CD4-positive, alpha-beta memory T cell (primary cell): ENCODE measurements at regions of chr15 and their contacts with region 1.

Region 1: DNA sequence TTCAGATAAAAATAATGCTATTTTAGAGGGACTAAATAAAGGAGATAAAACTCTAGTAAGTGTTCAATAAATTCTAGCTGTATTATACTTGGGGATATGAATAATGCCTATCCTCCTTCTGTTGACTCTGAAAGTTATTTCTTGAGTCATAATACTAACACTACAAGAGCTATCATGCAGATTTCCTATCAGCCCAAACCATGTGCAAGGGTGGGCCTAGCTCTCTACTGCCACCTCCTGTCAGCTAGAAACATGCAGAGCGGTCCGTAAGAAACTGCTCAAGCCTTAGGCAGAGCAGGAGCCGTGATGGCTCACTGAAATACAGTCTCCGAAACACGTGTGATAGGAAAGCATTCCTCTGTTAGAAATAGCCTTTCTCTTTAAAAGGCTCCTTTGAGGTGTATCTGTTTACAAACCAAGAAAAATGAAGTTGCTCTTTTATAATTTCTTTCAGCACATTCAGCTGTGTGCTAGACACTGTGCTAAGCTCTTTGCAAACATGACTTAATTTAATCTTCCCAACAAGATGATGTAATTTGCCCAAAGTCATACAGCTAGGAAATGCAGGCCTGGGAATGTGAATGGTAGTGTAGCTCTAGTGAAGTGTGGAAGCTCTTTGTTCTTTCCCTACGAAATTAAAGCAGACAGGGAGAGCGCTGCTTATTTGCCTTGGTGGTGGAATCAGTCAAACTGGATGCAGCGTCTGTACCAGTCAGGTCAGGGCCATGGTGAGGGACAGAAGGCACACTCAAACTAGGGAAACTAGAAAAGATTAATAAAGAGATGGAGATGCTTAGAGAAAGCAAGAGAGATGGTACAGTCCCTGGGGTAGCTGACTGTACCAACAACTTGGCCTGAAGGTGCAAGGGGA is 43.1 kb downstream of the MTHFS start:
- DNase-seq: peak; percentile 41 to 50 (median 46)
- H3K4me3 ChIP-seq: no peak overlapping the region
- H3K4me3 Mint-ChIP-seq: no peak overlapping the region
- H3K27ac ChIP-seq: no peak overlapping the region
- H3K27ac Mint-ChIP-seq: peak overlapping the region in 2 of 7 donors; percentile 18 to 39
- H3K4me1 ChIP-seq: peaks cover 5% of the 10 kb centered on the region
- H3K4me1 Mint-ChIP-seq: peaks cover 10 to 31% (median 16%) of the 10 kb centered on the region in 4 donors
- H3K27me3 ChIP-seq: no peaks in the 10 kb centered on the region
- H3K27me3 Mint-ChIP-seq: no peaks in the 10 kb centered on the region

Region 2: DNA sequence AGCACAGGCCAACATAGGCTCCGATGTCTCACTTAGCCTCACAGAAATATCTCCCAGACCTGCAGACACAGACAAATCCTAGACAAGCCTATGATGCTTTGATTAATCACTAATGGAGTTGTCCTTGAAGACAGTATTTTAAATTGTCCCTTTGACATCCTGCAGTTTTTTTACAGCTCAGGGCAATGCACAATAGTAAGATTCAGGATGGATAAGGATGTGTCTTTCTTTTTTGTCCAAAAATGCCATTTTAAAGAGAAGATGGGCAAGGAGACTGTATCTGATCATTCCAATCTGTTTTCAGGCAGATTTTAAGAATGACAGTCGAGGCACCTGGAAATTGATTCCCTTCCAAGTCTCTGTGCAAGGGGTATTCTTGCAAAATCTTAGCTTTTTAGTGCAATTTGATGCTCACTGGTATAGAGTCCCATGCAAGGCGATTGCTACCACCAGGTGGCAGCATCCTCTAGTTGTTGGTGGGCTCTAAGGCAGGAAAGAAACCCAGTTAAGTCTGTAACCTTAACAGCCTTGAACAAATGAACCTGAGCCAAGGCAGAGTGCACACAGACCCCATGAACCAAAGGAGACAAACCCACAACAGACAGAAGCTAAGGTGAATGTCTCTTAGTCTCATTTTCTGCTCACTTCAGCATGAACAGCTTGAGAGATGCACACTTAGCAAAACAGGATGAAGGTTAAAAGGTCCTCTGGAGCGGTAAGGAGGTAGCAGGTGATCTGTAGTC is 472.8 kb before region 1 on chr15:
- CTCF ChIA-PET with region 1: interaction called, 53 read pairs
- POLR2A ChIA-PET with region 1: no interaction called
- intact Hi-C with region 1: loop called (anchors 1 kb)
- DNase-seq: peak; percentile 47 to 65 (median 59)
- H3K4me3 ChIP-seq: no peak overlapping the region
- H3K4me3 Mint-ChIP-seq: no peak overlapping the region
- H3K27ac ChIP-seq: no peak overlapping the region
- H3K27ac Mint-ChIP-seq: no peak overlapping the region
- H3K4me1 ChIP-seq: no peaks in the 10 kb centered on the region
- H3K4me1 Mint-ChIP-seq: peaks cover 0 to 4% (median 2%) of the 10 kb centered on the region in 4 donors
- H3K27me3 ChIP-seq: no peaks in the 10 kb centered on the region
- H3K27me3 Mint-ChIP-seq: no peaks in the 10 kb centered on the region

Region 3: DNA sequence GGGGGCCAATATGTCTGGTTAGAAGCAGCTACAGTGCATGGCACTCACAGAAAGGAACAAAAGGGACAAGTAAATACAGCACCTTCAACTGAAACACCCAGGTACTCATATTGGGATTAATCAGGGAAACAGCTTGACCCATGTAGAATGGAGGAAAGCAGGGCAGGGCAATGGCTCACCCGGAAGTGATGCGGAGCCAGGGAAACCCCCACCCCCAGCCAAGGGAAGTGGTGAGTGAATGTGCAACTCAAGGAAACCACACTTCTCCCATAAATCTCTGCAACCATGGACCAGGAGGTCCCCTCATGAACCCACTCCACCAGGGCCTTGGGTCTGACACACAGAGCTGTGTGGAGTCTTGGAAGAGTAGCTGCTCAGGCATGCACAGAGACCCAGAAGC is 73.9 kb before region 1 on chr15:
- CTCF ChIA-PET with region 1: no interaction called
- POLR2A ChIA-PET with region 1: no interaction called
- intact Hi-C with region 1: no loop called
- DNase-seq: no peak
- H3K4me3 ChIP-seq: no peak overlapping the region
- H3K4me3 Mint-ChIP-seq: peak overlapping the region in 1 of 8 donors; percentile 60
- H3K27ac ChIP-seq: no peak overlapping the region
- H3K27ac Mint-ChIP-seq: no peak overlapping the region
- H3K4me1 ChIP-seq: peaks cover 8% of the 10 kb centered on the region
- H3K4me1 Mint-ChIP-seq: peaks cover 2 to 17% (median 5%) of the 10 kb centered on the region in 4 donors
- H3K27me3 ChIP-seq: no peaks in the 10 kb centered on the region
- H3K27me3 Mint-ChIP-seq: peaks cover 14 to 16% of the 10 kb centered on the region in 2 donors

Region 4: DNA sequence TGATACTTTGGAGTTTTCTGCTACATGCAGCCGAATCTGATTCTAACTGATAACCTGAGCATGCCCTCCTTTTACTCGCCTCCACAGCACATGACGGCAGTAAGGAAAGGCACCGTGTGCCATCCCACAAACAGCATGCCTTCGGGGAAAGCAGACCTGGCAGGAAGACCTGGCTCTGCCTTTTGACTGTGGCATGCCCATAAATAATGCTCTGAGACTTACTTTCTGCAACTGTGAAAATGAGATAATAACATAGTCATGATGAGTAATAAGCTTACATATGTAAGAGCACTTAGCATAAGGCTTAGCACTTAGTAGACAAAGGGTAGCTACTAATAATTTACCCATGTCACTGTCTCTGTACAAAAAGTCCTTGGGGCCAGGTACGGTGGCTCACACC is 10.2 kb after region 1 on chr15:
- CTCF ChIA-PET with region 1: interaction called, 74 read pairs
- POLR2A ChIA-PET with region 1: no interaction called
- intact Hi-C with region 1: no loop called
- DNase-seq: no peak
- H3K4me3 ChIP-seq: no peak overlapping the region
- H3K4me3 Mint-ChIP-seq: no peak overlapping the region
- H3K27ac ChIP-seq: no peak overlapping the region
- H3K27ac Mint-ChIP-seq: no peak overlapping the region
- H3K4me1 ChIP-seq: no peaks in the 10 kb centered on the region
- H3K4me1 Mint-ChIP-seq: peaks cover 6 to 31% (median 20%) of the 10 kb centered on the region in 4 donors
- H3K27me3 ChIP-seq: no peaks in the 10 kb centered on the region
- H3K27me3 Mint-ChIP-seq: no peaks in the 10 kb centered on the region

Region 5: DNA sequence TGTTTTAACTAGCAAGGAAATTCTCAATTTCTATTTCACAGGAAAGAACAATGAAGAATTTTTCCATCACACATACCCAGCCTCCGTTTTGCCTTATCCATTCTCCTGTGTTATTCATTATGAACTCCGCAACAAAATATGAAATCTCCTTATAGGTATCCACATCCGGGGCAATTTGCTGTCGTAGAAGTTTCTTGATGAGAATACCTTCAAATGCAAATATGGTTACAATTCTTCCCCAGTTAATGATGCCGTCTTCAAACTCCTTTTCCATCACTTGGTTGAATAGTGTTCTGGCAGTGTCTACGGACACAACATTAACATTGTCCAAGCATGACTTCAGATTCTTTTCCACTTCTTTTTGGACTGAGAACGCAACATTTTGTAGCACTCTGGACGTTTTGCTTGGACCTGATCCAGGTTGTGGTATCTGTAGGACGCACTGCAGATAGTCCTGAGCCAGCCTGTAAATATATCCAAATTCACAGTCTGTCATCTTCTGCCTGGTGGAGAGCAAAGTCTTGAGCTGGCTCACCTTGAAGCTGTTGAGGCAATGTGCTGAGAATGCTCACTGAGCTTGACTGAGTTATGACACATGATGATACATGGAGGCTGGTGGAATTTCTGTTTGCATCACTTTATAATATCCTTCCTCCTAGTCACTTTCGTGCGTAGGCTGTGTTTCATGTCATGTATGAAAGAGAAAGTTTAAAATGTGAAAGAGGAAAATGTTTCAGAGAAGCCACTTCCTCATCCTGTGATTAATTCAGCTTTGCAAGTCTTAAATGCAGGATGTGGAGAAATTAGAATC is 117.1 kb after region 1 on chr15 and contains the start of gene BCL2A1:
- CTCF ChIA-PET with region 1: interaction called, 11 read pairs
- POLR2A ChIA-PET with region 1: no interaction called
- intact Hi-C with region 1: no loop called
- DNase-seq: peak; percentile 67 to 82 (median 77)
- H3K4me3 ChIP-seq: peak within 1 kb of the TSS; percentile 69 to 92
- H3K4me3 Mint-ChIP-seq: peak within 1 kb of the TSS; percentile 87 to 98 (median 92)
- H3K27ac ChIP-seq: peak within 1 kb of the TSS; percentile 64
- H3K27ac Mint-ChIP-seq: peak within 1 kb of the TSS; percentile 90 to 98 (median 95)
- H3K4me1 ChIP-seq: peaks cover 52% of the 10 kb centered on the region
- H3K4me1 Mint-ChIP-seq: peaks cover 38 to 63% (median 51%) of the 10 kb centered on the region in 4 donors
- H3K27me3 ChIP-seq: no peaks in the 10 kb centered on the region
- H3K27me3 Mint-ChIP-seq: no peaks in the 10 kb centered on the region
- total RNA-seq, gene BCL2A1: 25.4 to 28.5 TPM

Region 6: GRCh38 chr15:80072285-80072994 is 218.7 kb after region 1 on chr15:
- CTCF ChIA-PET with region 1: no interaction called
- POLR2A ChIA-PET with region 1: no interaction called
- intact Hi-C with region 1: no loop called
- DNase-seq: peak; percentile 59 to 71 (median 65)
- H3K4me3 ChIP-seq: no peak overlapping the region
- H3K4me3 Mint-ChIP-seq: peak overlapping the region; percentile 51 to 87 (median 84)
- H3K27ac ChIP-seq: peak overlapping the region; percentile 21
- H3K27ac Mint-ChIP-seq: peak overlapping the region in 6 of 7 donors; percentile 3 to 79 (median 42)
- H3K4me1 ChIP-seq: peaks cover 45% of the 10 kb centered on the region
- H3K4me1 Mint-ChIP-seq: peaks cover 44 to 75% (median 61%) of the 10 kb centered on the region in 4 donors
- H3K27me3 ChIP-seq: no peaks in the 10 kb centered on the region
- H3K27me3 Mint-ChIP-seq: no peaks in the 10 kb centered on the region

Region 7: DNA sequence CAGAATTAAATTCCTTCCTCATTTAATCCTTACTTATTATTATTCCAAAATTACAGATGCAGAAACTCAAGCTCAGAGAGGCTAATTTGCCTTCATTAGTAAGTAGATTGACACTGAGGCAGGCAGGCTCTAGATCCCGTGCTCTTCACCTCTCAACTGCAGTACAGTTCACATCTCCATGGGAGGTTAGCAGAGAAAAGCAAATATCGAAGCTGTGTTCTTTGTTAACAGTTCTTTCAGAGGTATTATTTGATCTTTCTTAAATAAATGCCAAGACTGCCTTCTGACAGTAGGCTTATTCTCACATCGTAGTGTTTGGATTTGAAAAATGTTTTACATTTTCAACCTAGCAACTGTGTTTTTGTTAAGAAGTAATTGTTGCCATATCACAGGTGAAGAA is 283.2 kb after region 1 on chr15:
- CTCF ChIA-PET with region 1: no interaction called
- POLR2A ChIA-PET with region 1: no interaction called
- intact Hi-C with region 1: no loop called
- DNase-seq: no peak
- H3K4me3 ChIP-seq: no peak overlapping the region
- H3K4me3 Mint-ChIP-seq: no peak overlapping the region
- H3K27ac ChIP-seq: no peak overlapping the region
- H3K27ac Mint-ChIP-seq: no peak overlapping the region
- H3K4me1 ChIP-seq: no peaks in the 10 kb centered on the region
- H3K4me1 Mint-ChIP-seq: no peaks in the 10 kb centered on the region
- H3K27me3 ChIP-seq: no peaks in the 10 kb centered on the region
- H3K27me3 Mint-ChIP-seq: no peaks in the 10 kb centered on the region

Region 8: DNA sequence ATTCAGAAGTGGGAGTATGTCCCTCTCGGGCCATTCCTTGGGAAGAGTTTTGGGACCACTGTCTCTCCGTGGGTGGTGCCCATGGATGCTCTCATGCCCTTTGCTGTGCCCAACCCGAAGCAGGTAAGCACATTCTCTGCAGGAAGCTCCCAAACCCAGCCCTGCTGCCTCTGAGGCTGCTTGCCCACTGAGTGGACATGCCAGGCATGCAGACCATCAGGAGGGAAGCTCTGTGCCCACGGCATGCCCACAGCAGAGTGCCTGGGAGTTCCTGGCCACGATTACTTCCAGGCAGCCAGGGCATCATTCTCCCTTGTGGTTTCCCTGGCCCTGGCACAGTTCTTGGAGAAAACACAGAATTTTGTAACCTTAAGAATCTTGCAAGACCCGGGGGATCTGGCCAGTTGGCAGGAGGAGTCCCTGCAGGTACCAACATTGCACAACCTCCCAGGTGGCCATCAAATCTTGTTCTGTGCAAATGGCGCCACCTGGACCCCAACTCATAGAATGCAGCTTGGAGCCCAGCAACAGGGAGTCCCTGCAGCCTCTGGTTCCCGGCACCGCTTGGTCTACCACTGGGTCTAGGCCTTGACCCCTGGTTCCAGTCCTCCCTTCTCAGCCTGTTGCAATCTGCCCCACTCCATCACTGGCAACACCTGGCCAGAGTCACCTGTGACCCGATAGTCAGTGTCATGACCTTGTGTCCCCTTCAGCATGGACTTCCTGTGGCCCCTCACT is 319.5 kb after region 1 on chr15:
- CTCF ChIA-PET with region 1: interaction called, 7 read pairs
- POLR2A ChIA-PET with region 1: no interaction called
- intact Hi-C with region 1: loop called (anchors 2 kb)
- DNase-seq: peak; percentile 55 to 60 (median 59)
- H3K4me3 ChIP-seq: no peak overlapping the region
- H3K4me3 Mint-ChIP-seq: peak overlapping the region in 1 of 8 donors; percentile 15
- H3K27ac ChIP-seq: no peak overlapping the region
- H3K27ac Mint-ChIP-seq: no peak overlapping the region
- H3K4me1 ChIP-seq: no peaks in the 10 kb centered on the region
- H3K4me1 Mint-ChIP-seq: no peaks in the 10 kb centered on the region
- H3K27me3 ChIP-seq: no peaks in the 10 kb centered on the region
- H3K27me3 Mint-ChIP-seq: no peaks in the 10 kb centered on the region